Panc1 (cell line): ENCODE measurements at regions of chr6 and their contacts with region 1.

Region 1: GRCh38 chr6:20141931-20142330 is 70.3 kb downstream of the MBOAT1 start:
- DNase-seq: no peak
- ATAC-seq: no peak
- H3K4me3 ChIP-seq: no peak overlapping the region
- H3K27ac ChIP-seq: no peak overlapping the region
- H3K4me1 ChIP-seq: no peaks in the 10 kb centered on the region
- H3K27me3 ChIP-seq: no peaks in the 10 kb centered on the region
- CTCF ChIP-seq: no peak

Region 2: GRCh38 chr6:20757761-20758160 is 615.8 kb after region 1 on chr6:
- CTCF ChIA-PET with region 1: no interaction called
- POLR2A ChIA-PET with region 1: interaction called, 13 read pairs
- in situ Hi-C with region 1: no loop called
- intact Hi-C with region 1: no loop called
- DNase-seq: no peak
- ATAC-seq: no peak
- H3K4me3 ChIP-seq: no peak overlapping the region
- H3K27ac ChIP-seq: no peak overlapping the region
- H3K4me1 ChIP-seq: no peaks in the 10 kb centered on the region
- H3K27me3 ChIP-seq: no peaks in the 10 kb centered on the region
- CTCF ChIP-seq: no peak